PC-3 (cell line): ENCODE measurements at regions of chrX and their contacts with region 1.

Region 1: DNA sequence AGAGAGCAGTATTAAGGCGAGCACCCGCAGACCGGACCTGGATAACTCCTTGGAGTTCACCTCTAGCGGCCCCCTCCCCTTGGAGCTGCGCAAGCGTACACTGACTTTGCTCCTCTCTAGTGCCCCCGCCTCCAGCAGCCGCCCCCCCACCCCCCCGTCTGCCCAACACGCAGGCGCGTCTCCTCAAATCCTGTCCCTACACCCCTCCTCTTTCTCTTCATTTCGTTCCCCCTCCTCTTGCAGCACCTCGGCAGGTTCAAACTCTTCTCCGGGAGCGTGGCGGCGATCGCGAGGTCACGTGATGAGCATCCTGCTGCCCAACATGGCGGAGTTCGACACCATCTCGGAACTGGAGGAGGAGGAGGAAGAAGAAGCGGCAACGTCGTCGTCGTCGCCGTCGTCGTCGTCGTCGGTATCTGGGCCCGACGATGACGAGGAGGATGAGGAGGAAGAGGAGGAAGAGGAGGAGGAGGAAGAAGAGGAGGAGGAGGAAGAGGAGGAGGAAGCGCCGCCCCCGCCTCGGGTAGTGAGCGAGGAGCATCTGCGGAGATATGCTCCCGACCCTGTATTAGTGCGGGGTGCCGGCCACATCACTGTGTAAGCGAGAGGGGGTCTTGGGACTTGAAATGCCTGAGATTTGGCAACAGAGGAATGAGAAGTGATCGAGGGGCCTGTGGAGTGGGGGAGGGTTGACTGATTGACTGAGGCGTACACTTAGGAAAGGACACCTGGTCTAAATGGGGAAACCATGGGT is at the start of gene CHIC1:
- DNase-seq: peak; percentile 61
- ATAC-seq: peak; percentile 83
- H3K4me3 ChIP-seq: peak within 1 kb of the TSS; percentile 93
- H3K27ac ChIP-seq: peak within 1 kb of the TSS; percentile 49
- H3K4me1 ChIP-seq: peaks cover 10% of the 10 kb centered on the region
- H3K27me3 ChIP-seq: no peaks in the 10 kb centered on the region
- CTCF ChIP-seq: no peak
- total RNA-seq, gene CHIC1: 2.4 and 3.8 TPM in 2 replicates

Region 2: GRCh38 chrX:73577368-73577767 is 14.2 kb after region 1 on chrX:
- CTCF ChIA-PET with region 1: no interaction called
- POLR2A ChIA-PET with region 1: no interaction called
- intact Hi-C with region 1: loop called (anchors 1 kb)
- DNase-seq: peak; percentile 78
- ATAC-seq: peak; percentile 76
- H3K4me3 ChIP-seq: no peak overlapping the region
- H3K27ac ChIP-seq: peak overlapping the region; percentile 61
- H3K4me1 ChIP-seq: peaks cover 36% of the 10 kb centered on the region
- H3K27me3 ChIP-seq: no peaks in the 10 kb centered on the region
- CTCF ChIP-seq: no peak

Region 3: GRCh38 chrX:73683236-73683859 is 120.2 kb after region 1 on chrX:
- CTCF ChIA-PET with region 1: no interaction called
- POLR2A ChIA-PET with region 1: no interaction called
- intact Hi-C with region 1: loop called (anchors 10 kb)
- DNase-seq: peak; percentile 7
- ATAC-seq: no peak
- H3K4me3 ChIP-seq: no peak overlapping the region
- H3K27ac ChIP-seq: no peak overlapping the region
- H3K4me1 ChIP-seq: no peaks in the 10 kb centered on the region
- H3K27me3 ChIP-seq: no peaks in the 10 kb centered on the region
- CTCF ChIP-seq: no peak